Left lung (tissue), 14 donors: ENCODE measurements at regions of chr20 and their contacts with region 1.

Region 1: GRCh38 chr20:5393218-5393870 is 76.6 kb upstream of the PROKR2 start:
- DNase-seq: no peak
- ATAC-seq: no peak
- H3K4me3 ChIP-seq: no peak overlapping the region
- H3K27ac ChIP-seq: no peak overlapping the region
- H3K4me1 ChIP-seq: no peaks in the 10 kb centered on the region
- H3K27me3 ChIP-seq: peaks cover 0 to 14% of the 10 kb centered on the region in 2 donors
- CTCF ChIP-seq: no peak

Region 2: DNA sequence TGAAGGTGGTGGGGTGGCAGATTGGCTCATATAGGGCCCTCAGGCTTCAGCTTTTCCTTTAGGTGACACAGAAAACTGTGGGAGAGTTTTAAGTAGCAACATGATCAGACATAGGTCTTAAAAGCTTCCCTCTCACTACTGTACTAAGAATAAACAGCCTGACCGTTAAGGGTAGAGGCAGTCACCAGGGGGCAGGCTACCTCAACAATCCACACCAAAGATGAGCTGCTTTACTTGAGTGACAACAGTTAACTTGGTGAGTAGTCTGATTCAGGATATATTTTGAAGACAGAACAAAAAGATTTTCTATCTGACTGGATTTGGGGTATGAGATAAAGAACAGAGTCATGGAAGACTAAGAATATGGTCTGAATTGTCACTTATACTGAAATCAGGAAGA is 163.8 kb after region 1 on chr20:
- intact Hi-C with region 1: no loop called
- DNase-seq: peak in 1 of 4 donors; percentile 25
- ATAC-seq: peak; percentile 65
- H3K4me3 ChIP-seq: no peak overlapping the region
- H3K27ac ChIP-seq: no peak overlapping the region
- H3K4me1 ChIP-seq: no peaks in the 10 kb centered on the region
- H3K27me3 ChIP-seq: no peaks in the 10 kb centered on the region
- CTCF ChIP-seq: peak; percentile 30 to 45

Region 3: GRCh38 chr20:5969348-5969935 is 576.1 kb after region 1 on chr20:
- intact Hi-C with region 1: loop called in 1 of 2 experiments (anchors 10 kb)
- DNase-seq: no peak
- ATAC-seq: no peak
- H3K4me3 ChIP-seq: no peak overlapping the region
- H3K27ac ChIP-seq: no peak overlapping the region
- H3K4me1 ChIP-seq: peaks cover 0 to 8% of the 10 kb centered on the region in 2 donors
- H3K27me3 ChIP-seq: no peaks in the 10 kb centered on the region
- CTCF ChIP-seq: no peak